Transverse colon (tissue), 4 donors: ENCODE measurements at regions of chr2 and their contacts with region 1.

Region 1: DNA sequence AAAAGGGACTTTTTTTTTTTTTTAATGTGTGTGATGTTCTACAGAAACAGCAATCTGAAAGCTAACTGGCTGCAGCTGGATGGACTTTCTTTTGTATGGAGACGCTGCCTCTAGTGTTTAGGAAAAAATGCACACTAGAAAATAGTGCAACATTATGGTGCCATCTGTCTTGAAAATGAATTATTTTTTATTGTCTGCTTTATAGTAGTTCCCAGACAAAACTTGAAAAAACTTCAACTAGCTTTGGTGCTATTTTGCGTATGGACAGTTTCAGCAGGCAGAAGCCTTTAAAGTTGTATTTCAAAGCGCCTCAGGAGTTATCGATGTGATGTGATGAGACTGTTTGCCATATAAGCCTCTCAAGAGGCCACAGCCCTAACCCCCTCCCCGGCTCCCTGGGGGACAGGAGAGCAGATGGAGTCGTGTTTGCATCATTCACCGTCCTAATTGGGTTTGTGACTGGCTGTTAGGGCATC is 86.9 kb downstream of the LTBP1 start:
- DNase-seq: no peak
- H3K4me3 ChIP-seq: peak overlapping the region in 3 of 4 donors; percentile 17 to 42 (median 20)
- H3K27ac ChIP-seq: peak overlapping the region; percentile 38 to 62 (median 54)
- H3K4me1 ChIP-seq: peaks cover 0 to 13% (median 0%) of the 10 kb centered on the region in 4 donors
- H3K27me3 ChIP-seq: no peaks in the 10 kb centered on the region
- CTCF ChIP-seq: peak; percentile 46 to 68 (median 53)
- EP300 ChIP-seq: no peak
- POLR2A ChIP-seq: no peak

Region 2: DNA sequence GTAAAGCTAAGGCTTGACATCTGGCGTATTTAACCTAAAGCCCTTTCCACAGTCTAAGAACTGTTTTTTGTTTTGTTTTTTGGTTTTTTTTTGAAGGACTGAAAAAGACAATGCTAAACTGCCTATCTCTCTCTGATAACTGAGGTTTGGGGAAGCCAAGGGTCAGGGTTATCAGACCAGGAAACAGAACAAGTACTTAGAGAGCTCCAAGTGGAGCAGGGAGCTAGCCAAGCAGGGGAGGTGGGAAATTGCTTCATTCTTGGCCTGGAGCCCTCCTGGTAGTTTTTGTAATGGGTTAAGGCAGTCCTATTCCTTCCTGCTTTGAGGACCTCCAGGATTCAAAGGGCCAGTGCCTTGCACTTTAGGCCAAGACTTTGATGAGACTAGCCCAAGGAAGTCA is 241.2 kb before region 1 on chr2:
- in situ Hi-C with region 1: loop called in 1 of 4 experiments (anchors 25 kb)
- intact Hi-C with region 1: no loop called
- DNase-seq: no peak
- H3K4me3 ChIP-seq: no peak overlapping the region
- H3K27ac ChIP-seq: no peak overlapping the region
- H3K4me1 ChIP-seq: no peaks in the 10 kb centered on the region
- H3K27me3 ChIP-seq: no peaks in the 10 kb centered on the region
- CTCF ChIP-seq: no peak
- EP300 ChIP-seq: no peak
- POLR2A ChIP-seq: no peak

Region 3: DNA sequence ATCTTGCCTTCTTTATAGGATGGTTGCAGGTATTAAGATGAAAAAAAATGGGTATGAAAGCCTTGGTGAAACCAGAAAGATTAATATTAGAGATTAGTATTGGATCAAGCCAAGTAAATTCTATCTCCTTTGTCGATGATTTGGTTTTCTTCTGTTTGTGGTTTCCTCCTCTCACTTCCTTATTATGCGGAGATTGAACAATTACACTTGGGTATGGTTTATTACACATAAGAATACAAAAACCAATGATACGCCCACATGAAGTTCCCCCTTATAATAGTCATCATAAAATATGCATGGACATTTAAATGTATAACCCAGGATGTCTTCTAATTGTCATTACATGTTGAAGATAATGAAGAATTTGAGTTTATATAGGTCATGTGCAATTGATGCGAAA is 82.0 kb before region 1 on chr2:
- in situ Hi-C with region 1: loop called in 1 of 4 experiments (anchors 5 kb)
- intact Hi-C with region 1: no loop called
- DNase-seq: no peak
- H3K4me3 ChIP-seq: no peak overlapping the region
- H3K27ac ChIP-seq: no peak overlapping the region
- H3K4me1 ChIP-seq: peaks cover 0 to 15% (median 7%) of the 10 kb centered on the region in 4 donors
- H3K27me3 ChIP-seq: peaks cover 4% of the 10 kb centered on the region
- CTCF ChIP-seq: no peak
- EP300 ChIP-seq: no peak
- POLR2A ChIP-seq: no peak

Region 4: GRCh38 chr2:33000986-33001385 is 32.7 kb before region 1 on chr2:
- in situ Hi-C with region 1: no loop called
- intact Hi-C with region 1: no loop called
- DNase-seq: no peak
- H3K4me3 ChIP-seq: no peak overlapping the region
- H3K27ac ChIP-seq: no peak overlapping the region
- H3K4me1 ChIP-seq: no peaks in the 10 kb centered on the region
- H3K27me3 ChIP-seq: no peaks in the 10 kb centered on the region
- CTCF ChIP-seq: no peak
- EP300 ChIP-seq: no peak
- POLR2A ChIP-seq: no peak

Region 5: GRCh38 chr2:33267756-33268155 is 234.1 kb after region 1 on chr2:
- in situ Hi-C with region 1: no loop called
- intact Hi-C with region 1: loop called (anchors 10 kb)
- DNase-seq: no peak
- H3K4me3 ChIP-seq: no peak overlapping the region
- H3K27ac ChIP-seq: no peak overlapping the region
- H3K4me1 ChIP-seq: peaks cover 0 to 8% (median 0%) of the 10 kb centered on the region in 4 donors
- H3K27me3 ChIP-seq: no peaks in the 10 kb centered on the region
- CTCF ChIP-seq: no peak
- EP300 ChIP-seq: no peak
- POLR2A ChIP-seq: no peak

Region 6: DNA sequence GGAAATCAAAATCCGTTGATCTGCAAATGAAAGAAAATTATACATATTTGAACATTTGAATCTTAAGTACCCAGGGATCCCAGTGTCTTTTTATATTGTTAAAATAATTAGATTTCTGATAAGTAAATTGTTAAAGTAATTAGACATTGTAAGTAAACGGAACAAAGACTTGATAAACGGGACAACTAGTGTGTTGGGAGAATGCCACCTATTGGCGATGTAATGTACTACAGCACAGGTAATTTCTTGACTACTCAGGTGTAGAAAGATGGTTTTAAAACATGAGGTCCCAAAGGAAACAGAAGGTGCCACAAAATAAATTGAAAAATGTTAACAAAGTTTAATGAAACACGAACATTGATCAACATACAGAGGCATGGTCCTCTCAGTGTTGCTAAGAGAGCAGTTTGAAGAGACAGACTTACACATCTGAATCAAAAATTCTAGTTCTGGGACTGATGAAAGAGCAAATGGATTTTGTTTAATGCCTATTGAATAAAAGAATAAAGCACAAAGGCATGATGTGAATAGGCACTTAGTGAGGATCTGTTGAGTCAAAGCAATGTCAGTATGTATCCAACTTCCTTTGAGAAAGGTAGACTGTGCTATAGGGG is 339.4 kb after region 1 on chr2:
- in situ Hi-C with region 1: loop called in 2 of 4 experiments (anchors 10 to 25 kb)
- intact Hi-C with region 1: no loop called
- DNase-seq: no peak
- H3K4me3 ChIP-seq: no peak overlapping the region
- H3K27ac ChIP-seq: no peak overlapping the region
- H3K4me1 ChIP-seq: no peaks in the 10 kb centered on the region
- H3K27me3 ChIP-seq: no peaks in the 10 kb centered on the region
- CTCF ChIP-seq: peak; percentile 71 to 83 (median 78)
- EP300 ChIP-seq: no peak
- POLR2A ChIP-seq: no peak

Region 7: DNA sequence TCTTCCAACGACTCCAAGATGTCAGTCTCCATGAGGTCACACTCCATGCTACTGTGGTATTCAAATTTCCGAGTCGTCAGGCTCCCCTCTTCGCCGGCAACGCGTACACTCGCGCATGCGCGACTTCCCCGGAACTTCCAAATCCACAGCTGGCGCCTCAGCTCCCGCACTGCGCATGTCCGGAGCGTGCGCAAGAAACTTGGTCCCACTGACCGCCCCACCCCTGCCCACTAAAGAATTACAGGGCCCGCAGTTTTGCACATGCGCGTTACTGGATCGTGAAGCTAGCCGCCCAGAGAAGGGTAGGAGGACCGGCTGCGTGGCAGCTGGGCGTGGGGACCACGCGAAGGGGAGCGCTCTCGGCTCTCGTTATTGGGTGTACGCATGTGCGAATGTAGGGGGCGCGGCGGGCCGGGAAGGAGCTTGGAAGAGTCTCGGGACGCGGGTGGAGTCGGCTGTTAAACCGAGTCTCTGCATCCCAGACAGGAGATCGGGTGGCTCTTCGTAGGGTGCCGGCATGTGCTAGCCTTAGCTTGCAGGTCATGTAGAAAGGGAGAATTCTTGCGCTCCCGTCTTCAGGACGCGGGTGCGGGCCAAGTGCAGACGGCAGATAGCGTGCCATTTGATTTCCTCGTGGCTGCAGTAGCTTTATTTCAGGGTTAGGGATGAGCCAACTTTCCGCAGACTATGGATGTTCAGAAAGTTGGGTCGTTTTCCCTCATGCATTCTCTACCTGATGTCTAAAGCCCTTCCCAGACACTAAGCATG is 565.7 kb after region 1 on chr2 and contains the start of gene FAM98A:
- in situ Hi-C with region 1: loop called in 1 of 4 experiments (anchors 25 kb)
- intact Hi-C with region 1: no loop called
- DNase-seq: peak; percentile 99
- H3K4me3 ChIP-seq: peak within 1 kb of the TSS; percentile 49 to 99 (median 93)
- H3K27ac ChIP-seq: peak within 1 kb of the TSS; percentile 86 to 91 (median 88)
- H3K4me1 ChIP-seq: peaks cover 0 to 36% (median 13%) of the 10 kb centered on the region in 4 donors
- H3K27me3 ChIP-seq: no peaks in the 10 kb centered on the region
- CTCF ChIP-seq: peak in 1 of 5 experiments; percentile 22
- EP300 ChIP-seq: no peak
- POLR2A ChIP-seq: peak; percentile 49
- total RNA-seq, gene FAM98A: 13.1 to 30.3 (median 25.5) TPM

Region 8: DNA sequence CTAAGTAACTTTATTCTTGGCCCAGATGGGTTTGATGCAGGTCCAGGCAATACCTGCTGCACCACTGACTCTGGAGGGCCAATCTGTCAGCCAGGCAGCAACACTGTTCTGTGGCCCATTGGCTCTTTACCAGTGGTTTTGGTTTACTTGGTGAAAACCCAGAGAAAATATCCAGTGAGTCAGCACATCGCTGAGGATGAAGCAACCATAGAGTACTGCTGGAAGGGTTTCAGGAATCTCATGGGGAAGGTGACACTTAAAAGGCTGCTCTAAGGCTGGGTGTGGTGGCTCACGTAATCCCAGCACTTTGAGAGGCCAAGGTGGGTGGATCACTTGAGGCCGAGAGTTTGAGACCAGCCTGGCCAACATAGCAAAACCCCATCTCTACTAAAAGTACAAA is 758.0 kb after region 1 on chr2:
- in situ Hi-C with region 1: no loop called
- intact Hi-C with region 1: loop called (anchors 10 kb)
- DNase-seq: no peak
- H3K4me3 ChIP-seq: no peak overlapping the region
- H3K27ac ChIP-seq: no peak overlapping the region
- H3K4me1 ChIP-seq: no peaks in the 10 kb centered on the region
- H3K27me3 ChIP-seq: no peaks in the 10 kb centered on the region
- CTCF ChIP-seq: no peak
- EP300 ChIP-seq: no peak
- POLR2A ChIP-seq: no peak